A549 (cell line): ENCODE measurements at regions of chr9 and their contacts with region 1.

Region 1: GRCh38 chr9:129726322-129727160 is 26.3 kb downstream of the PTGES start:
- DNase-seq: peak; percentile 87 to 97
- ATAC-seq: peak; percentile 91 to 97
- H3K4me3 ChIP-seq: no peak overlapping the region
- H3K27ac ChIP-seq: peak overlapping the region in 1 of 2 experiments; percentile 73; a peak in 3 of 6 replicates
- H3K4me1 ChIP-seq: no peaks in the 10 kb centered on the region
- CTCF ChIP-seq: peak; percentile 93
- EP300 ChIP-seq: no peak
- POLR2A ChIP-seq: no peak
- RAD21 ChIP-seq: peak; percentile 87 to 91

Region 2: DNA sequence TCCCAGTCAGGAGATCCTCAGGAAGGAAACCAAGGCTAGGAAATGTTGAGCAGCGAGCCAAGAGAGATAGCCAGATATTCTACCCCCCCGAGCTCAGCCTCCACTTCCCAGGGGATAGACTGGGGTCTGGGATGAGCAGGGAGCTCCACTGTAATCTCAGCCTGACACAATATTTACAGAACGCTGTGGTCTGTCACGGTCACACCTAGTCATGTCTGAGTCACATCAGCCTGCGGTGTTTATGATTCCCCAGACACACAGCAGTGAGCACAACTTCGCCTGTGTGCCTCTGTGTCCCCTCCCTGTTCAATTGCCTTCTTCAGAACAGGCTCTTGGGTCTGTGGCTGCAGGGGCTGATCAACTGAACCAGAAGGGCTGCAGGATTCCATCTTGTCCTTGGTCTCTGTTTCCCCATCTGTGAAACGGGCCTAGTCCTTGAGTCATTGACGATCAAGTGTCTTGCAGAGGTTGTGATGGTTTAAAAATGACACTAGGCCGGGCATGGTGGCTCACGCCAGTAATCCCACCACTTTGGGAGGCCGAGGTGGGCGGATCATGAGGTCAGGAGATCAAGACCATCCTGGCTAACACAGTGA is 69.6 kb before region 1 on chr9:
- CTCF ChIA-PET with region 1: interaction called, 37 read pairs
- POLR2A ChIA-PET with region 1: no interaction called
- DNase-seq: peak; percentile 57 to 83
- ATAC-seq: peak; percentile 89 to 92
- H3K4me3 ChIP-seq: no peak overlapping the region
- H3K27ac ChIP-seq: peak overlapping the region; percentile 40 to 47; a peak in 3 of 6 replicates
- H3K4me1 ChIP-seq: peaks cover 17% of the 10 kb centered on the region
- CTCF ChIP-seq: no peak
- EP300 ChIP-seq: no peak
- POLR2A ChIP-seq: no peak
- RAD21 ChIP-seq: no peak

Region 3: DNA sequence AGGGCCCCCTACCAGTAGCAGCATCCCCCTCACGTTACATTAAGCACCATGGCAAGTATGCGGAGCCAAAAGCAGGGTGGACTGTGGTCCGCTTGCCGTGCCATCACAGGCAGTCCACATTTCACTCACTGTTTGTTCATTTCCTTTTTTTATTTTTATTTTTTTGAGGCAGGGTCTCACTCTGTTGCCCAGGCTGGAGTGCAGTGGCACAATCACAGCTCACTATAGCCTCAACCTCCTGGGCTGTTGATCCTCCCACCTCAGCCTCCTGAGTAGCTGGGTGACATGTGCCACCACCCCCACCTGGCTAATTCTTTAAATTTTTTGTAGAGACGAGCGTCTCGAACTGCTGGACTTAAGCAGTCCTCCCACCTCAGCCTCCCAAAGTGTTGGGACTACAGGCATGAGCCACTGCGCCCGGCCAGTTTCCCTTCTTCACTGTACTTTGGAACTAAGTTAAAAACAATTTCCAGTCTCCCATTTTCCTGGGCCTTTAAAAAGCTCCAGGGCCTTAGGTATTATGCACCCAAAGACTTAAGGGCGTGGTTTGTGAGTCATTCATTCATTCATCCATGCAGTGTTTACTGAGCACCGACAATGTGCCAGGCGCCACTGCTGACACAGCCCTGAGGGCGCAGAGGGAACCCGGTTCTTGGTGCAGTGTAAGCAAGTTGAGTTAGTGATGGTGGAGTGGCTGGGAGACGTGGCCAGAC is 41.2 kb before region 1 on chr9:
- CTCF ChIA-PET with region 1: interaction called, 20 read pairs
- POLR2A ChIA-PET with region 1: no interaction called
- DNase-seq: peak; percentile 84
- ATAC-seq: peak; percentile 77 to 84
- H3K4me3 ChIP-seq: no peak overlapping the region
- H3K27ac ChIP-seq: peak overlapping the region; percentile 74 to 85
- H3K4me1 ChIP-seq: peaks cover 38% of the 10 kb centered on the region
- CTCF ChIP-seq: no peak
- EP300 ChIP-seq: no peak
- POLR2A ChIP-seq: no peak
- RAD21 ChIP-seq: no peak

Region 4: DNA sequence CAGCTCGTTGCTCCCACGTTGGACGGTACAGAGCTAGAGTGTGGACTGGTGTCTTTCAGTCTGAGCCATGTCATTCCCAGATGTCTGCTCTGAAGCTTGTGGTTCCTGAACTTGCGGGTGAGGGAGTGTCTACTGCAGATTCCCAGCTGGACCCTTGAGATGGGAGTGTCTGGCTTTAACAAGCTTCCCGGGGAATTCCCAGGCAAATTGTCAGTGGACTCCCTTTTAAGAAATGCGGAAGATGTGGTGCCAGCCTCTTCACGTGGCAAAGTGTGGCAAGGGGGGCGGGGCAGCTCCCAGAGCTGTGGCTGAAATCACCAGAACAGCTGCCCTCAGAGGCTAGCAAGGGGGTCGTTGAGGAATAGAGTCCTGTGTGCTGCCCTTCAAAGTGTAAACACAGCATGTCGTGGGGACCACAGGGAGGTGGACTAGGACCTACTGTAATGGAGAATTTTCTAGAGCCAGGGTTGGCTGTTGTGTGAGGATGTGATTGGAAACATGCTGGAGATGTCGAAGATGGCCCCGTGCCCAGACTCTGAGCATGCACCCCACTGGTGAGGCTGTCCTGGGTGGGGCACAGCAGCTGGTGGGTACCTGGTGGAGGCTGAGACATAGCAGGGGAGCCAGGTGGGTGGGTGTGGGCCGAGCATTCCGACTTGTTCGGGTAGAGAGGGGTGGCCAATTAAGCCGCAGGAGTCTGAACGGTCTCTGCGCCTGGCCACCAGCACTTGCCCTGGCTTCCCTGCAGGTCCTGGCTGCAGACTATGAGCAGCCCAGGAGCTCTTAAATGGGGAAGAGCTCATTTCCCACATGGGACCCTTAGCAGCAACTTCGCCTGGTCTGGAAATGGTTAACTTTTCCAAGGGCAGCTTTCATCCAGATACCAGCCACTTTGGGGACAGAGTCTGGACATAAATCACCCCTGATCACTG is 23.7 kb before region 1 on chr9:
- CTCF ChIA-PET with region 1: interaction called, 45 read pairs
- POLR2A ChIA-PET with region 1: interaction called, 3 read pairs
- DNase-seq: peak; percentile 57 to 61
- ATAC-seq: peak in 1 of 2 experiments; percentile 49; a peak in 3 of 6 replicates
- H3K4me3 ChIP-seq: no peak overlapping the region
- H3K27ac ChIP-seq: 0 out of 6 replicates have a peak overlapping the region, but pooled peaks of 1 of the 2 experiments have one; percentile 19
- H3K4me1 ChIP-seq: peaks cover 8% of the 10 kb centered on the region
- CTCF ChIP-seq: no peak
- EP300 ChIP-seq: no peak
- POLR2A ChIP-seq: no peak
- RAD21 ChIP-seq: no peak

Region 5: GRCh38 chr9:129752915-129753729 is 26.6 kb after region 1 on chr9 and contains the start of gene PTGES:
- CTCF ChIA-PET with region 1: interaction called, 36 read pairs
- POLR2A ChIA-PET with region 1: interaction called, 3 read pairs
- DNase-seq: peak; percentile 79 to 91
- ATAC-seq: peak; percentile 93 to 97
- H3K4me3 ChIP-seq: peak within 1 kb of the TSS; percentile 51
- H3K27ac ChIP-seq: peak within 1 kb of the TSS; percentile 64 to 78
- H3K4me1 ChIP-seq: peaks cover 47% of the 10 kb centered on the region
- CTCF ChIP-seq: no peak
- EP300 ChIP-seq: no peak
- POLR2A ChIP-seq: peak; percentile 51
- RAD21 ChIP-seq: no peak
- polyA plus RNA-seq, gene PTGES: 19.1 and 22.1 TPM in 2 replicates

Region 6: GRCh38 chr9:129796029-129796910 is 69.7 kb after region 1 on chr9:
- CTCF ChIA-PET with region 1: interaction called, 1,179 read pairs
- POLR2A ChIA-PET with region 1: interaction called, 6 read pairs
- DNase-seq: no peak
- ATAC-seq: peak in 1 of 2 experiments; percentile 16; a peak in 2 of 6 replicates
- H3K4me3 ChIP-seq: no peak overlapping the region
- H3K27ac ChIP-seq: no peak overlapping the region
- H3K4me1 ChIP-seq: peaks cover 3% of the 10 kb centered on the region; the same call in 1 of the 3 replicates
- CTCF ChIP-seq: no peak
- EP300 ChIP-seq: no peak
- POLR2A ChIP-seq: no peak
- RAD21 ChIP-seq: no peak